GM10248 (cell line): ENCODE measurements at regions of chr1 and their contacts with region 1.

Region 1: DNA sequence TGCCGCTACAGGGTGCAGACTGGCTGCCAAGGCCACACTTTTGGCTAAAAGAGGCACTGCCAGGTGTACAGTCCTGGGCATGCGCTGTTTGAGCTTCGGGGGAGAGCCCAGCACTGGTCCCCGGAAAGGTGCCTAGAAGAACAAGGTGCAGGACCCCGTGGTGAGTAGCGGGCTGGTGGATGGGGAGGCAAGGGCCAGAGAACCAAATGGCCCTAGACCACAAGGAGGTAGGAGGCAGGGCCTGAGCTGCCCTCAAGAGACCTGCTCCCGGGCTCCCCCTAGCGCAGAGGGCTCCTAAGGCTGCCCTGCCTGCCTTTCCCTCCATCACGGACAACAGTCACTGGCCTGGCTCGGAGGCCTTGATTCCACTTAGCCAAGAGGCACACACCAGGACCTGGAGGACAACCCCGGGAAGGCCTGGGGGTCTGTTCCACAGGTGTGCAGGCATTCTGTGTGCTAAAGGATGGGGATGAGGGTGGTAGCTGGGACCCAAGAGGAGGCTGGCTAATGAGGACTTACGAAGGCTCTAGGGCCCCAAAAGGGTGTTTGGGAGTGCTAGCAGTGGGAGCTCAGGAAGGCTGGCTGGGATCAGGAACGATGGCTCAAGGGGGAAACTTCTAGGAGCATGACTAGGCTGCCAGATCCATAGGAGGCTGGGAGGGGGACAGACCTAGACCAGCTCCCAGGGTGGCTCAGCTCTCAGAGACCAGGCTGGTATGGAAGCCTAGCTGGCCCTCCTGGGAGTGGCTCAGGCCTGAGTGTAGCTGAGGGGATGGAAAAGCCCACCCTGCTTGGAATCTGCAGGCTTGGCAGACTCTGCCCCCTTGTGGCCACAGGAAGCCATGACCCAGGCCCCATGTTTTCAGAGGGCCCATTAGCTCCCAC is 742 bp downstream of the ARTN start:
- DNase-seq: peak; percentile 90
- CTCF ChIP-seq: peak; percentile 92

Region 2: DNA sequence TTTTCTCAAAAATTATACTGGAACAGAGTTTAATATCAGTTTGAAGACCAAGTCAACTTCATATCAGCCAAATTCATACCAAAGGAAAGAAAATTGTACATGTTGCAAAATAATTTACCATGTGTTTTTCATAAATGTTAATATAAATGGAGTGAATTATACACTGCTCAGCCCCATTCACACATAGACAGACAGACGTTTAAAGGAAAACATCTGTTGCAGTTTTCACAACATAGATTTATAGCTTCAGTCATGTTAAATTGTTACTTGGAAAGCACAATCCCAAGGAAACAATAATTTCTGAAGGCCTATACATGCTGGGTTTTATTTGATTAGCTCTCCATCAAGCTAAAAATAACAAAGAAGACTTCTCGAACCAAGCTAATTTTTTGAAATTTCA is 452.9 kb before region 1 on chr1:
- CTCF ChIA-PET with region 1: no interaction called
- POLR2A ChIA-PET with region 1: no interaction called
- DNase-seq: no peak
- CTCF ChIP-seq: no peak

Region 3: GRCh38 chr1:43529206-43529731 is 405.1 kb before region 1 on chr1:
- CTCF ChIA-PET with region 1: interaction called, 44 read pairs
- POLR2A ChIA-PET with region 1: no interaction called
- DNase-seq: peak; percentile 83
- CTCF ChIP-seq: peak; percentile 96

Region 4: DNA sequence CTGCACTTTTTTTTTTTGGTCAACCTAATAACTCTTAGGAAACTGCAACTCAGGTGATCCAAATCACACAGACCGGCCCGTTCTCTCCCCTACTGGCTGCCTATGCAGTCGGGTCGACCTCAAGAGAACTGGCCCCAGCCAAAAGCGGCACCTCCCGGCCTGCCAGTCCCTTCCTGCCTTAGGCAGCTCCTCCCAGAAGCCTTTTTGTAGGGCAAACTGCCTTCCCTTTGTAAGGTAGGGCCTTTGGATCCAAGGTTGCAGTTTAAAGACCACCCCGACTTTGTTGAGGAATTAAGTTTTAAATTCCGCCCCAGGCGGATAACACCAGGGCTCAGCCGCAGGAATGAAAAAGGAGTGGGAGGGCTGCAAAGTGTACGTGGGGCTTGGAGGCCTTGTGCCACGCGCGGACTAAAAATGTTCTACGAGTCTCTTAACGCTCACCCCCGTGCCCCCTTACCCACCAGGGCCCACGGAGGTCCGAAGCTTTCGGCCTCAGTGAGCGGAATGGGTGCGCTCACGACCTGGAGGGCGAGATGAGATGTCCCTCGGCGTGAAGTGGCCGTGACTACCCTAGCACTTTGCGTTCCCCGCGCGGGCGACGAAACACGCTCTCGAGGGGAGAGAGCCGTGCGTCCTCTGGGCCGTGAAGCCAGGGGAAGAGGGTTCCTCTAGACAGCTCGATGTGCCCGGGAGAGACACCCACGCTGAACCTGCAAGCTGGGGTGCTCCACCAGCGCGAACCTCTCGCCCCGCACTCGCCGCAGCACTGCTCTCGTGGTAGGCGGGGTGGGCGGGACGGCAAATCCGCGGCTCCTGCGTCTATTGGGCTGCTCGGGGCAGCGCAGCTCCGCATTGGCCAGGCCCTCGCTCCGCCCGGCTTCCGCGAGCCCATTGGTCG is 227.5 kb before region 1 on chr1:
- CTCF ChIA-PET with region 1: interaction called, 18 read pairs
- POLR2A ChIA-PET with region 1: no interaction called
- DNase-seq: peak; percentile 97
- CTCF ChIP-seq: no peak

Region 5: GRCh38 chr1:43805345-43805744 is 129.0 kb before region 1 on chr1:
- CTCF ChIA-PET with region 1: interaction called, 10 read pairs
- POLR2A ChIA-PET with region 1: no interaction called
- DNase-seq: no peak
- CTCF ChIP-seq: no peak

Region 6: DNA sequence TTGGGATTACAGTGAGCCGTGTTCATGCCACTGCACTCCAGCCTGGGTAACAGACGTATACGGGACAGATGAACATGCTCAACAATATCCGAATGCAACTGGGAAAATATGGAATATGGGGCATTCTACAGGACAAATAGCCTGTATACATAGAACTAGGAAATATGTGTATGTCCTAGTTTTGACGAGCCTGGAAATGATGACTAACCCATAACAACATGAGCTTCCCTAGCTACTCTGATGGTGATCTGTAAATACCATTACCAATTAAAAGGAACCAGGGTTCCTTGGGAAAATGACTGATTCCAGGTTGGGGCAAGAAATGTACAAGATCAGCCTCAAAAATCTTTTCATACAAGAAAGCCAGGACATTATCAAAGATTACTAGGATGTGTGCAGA is 43.5 kb before region 1 on chr1:
- CTCF ChIA-PET with region 1: interaction called, 14 read pairs
- POLR2A ChIA-PET with region 1: no interaction called
- DNase-seq: no peak
- CTCF ChIP-seq: no peak

Region 7: DNA sequence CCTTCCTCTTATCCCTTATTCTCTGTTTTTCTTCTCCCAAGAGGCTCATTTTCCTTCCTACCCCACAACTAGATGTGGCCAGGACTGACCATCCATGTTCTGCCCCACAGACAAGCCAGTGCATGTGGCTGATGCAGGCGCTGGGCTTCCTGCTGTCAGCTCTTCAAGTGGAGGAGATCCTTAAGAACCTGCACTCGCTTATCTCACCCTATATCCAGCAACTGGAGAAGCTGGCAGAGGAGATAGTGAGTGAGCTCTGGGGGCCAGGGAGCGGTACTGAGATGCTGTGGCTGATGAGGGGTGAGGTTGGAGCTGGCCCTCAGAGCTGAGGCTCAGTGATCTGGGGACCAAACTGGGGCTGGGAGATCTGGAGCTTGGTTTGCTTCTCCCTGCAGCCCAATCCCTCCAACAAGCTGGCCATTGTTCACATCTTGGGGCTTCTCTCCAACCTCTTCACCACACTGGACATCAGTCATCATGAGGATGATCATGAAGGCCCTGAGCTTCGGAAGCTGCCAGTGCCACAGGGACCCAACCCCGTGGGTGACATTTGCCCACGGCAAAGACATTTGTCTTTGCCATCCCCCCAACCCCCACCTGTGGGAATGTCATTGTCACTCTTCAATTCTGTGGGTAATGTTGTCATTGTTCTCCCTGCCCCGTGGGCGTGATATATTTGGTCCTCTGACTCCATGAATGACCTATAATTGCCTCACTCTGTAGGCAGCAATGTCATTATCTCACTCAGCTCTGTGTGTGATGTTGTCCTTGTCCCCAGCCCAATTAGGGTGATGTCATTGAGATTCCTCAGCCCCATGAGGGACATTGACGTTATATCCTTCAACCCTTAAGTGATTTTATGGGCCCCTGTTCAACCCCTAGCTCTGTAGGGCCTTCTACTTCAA is 24.3 kb after region 1 on chr1:
- CTCF ChIA-PET with region 1: interaction called, 33 read pairs
- POLR2A ChIA-PET with region 1: no interaction called
- DNase-seq: no peak
- CTCF ChIP-seq: no peak

Region 8: GRCh38 chr1:44842862-44843655 is 908.7 kb after region 1 on chr1 and contains the start of gene PTCH2:
- CTCF ChIA-PET with region 1: no interaction called
- POLR2A ChIA-PET with region 1: no interaction called
- DNase-seq: peak; percentile 62
- CTCF ChIP-seq: no peak